ENCODE measurements at regions of chr12 and their contacts with region 1.

Region 1: GRCh38 chr12:52147367-52147972 is 44.3 kb downstream of the KRT80 start:
- DNase-seq: peak; percentile 99
- H3K4me3 ChIP-seq: no peak overlapping the region
- H3K27ac ChIP-seq: peak overlapping the region; percentile 100
- H3K4me1 ChIP-seq: peaks cover 89% of the 10 kb centered on the region
- H3K27me3 ChIP-seq: no peaks in the 10 kb centered on the region
- CTCF ChIP-seq: no peak

Region 2: DNA sequence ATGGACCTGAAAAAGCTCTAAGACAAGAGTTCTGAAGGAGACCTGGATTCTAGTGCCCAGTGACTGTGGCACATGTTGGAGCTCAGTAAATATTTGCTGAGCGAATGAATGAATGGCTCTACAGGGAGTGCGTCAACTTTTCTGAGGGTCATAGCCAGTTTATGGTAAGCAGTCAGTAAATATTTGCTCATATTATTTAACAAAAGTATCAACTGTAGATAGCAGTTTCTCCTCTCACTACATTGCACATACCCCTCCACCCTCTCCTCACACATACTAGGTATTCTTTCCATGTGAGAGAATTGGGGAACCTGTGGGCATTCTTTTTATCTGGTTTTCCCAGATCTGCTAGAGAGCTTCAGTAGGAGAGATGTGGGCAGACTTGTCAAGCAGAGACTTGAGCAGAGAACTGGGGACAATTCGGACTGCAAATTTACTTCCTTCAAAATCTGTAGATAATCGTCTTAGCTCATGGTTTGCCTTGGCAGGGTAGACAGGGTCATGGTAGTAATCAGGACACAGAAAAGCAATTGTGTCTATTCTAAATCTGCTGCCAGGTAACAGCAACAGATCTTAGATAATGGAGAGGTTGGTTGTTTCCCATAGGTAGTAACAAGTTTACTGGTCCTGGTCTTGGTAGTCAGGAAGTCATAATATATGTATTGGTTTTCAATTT is 717.1 kb before region 1 on chr12:
- CTCF ChIA-PET with region 1: no interaction called
- dilution Hi-C with region 1: no loop called
- in situ Hi-C with region 1: no loop called
- intact Hi-C with region 1: no loop called
- DNase-seq: no peak
- H3K4me3 ChIP-seq: no peak overlapping the region
- H3K27ac ChIP-seq: no peak overlapping the region
- H3K4me1 ChIP-seq: no peaks in the 10 kb centered on the region
- H3K27me3 ChIP-seq: no peaks in the 10 kb centered on the region
- CTCF ChIP-seq: no peak

Region 3: GRCh38 chr12:52380271-52380694 is 232.8 kb after region 1 on chr12:
- CTCF ChIA-PET with region 1: no interaction called
- dilution Hi-C with region 1: no loop called
- in situ Hi-C with region 1: loop called in 1 of 2 experiments (anchors 5 kb)
- intact Hi-C with region 1: no loop called
- DNase-seq: peak; percentile 58
- H3K4me3 ChIP-seq: no peak overlapping the region
- H3K27ac ChIP-seq: no peak overlapping the region
- H3K4me1 ChIP-seq: no peaks in the 10 kb centered on the region
- H3K27me3 ChIP-seq: no peaks in the 10 kb centered on the region
- CTCF ChIP-seq: peak; percentile 73 to 88

Region 4: GRCh38 chr12:52515927-52516831 is 368.7 kb after region 1 on chr12:
- CTCF ChIA-PET with region 1: no interaction called
- dilution Hi-C with region 1: no loop called
- in situ Hi-C with region 1: loop called (anchors 5 to 10 kb)
- intact Hi-C with region 1: loop called (anchors 1 kb)
- DNase-seq: peak; percentile 82
- H3K4me3 ChIP-seq: peak overlapping the region; percentile 66 to 94 (median 79)
- H3K27ac ChIP-seq: peak overlapping the region; percentile 82
- H3K4me1 ChIP-seq: peaks cover 30% of the 10 kb centered on the region
- H3K27me3 ChIP-seq: no peaks in the 10 kb centered on the region
- CTCF ChIP-seq: no peak

Measured in mammary epithelial cell (primary cell).